Transverse colon (tissue), 4 donors: ENCODE measurements at regions of chr14 and their contacts with region 1.

Region 1: DNA sequence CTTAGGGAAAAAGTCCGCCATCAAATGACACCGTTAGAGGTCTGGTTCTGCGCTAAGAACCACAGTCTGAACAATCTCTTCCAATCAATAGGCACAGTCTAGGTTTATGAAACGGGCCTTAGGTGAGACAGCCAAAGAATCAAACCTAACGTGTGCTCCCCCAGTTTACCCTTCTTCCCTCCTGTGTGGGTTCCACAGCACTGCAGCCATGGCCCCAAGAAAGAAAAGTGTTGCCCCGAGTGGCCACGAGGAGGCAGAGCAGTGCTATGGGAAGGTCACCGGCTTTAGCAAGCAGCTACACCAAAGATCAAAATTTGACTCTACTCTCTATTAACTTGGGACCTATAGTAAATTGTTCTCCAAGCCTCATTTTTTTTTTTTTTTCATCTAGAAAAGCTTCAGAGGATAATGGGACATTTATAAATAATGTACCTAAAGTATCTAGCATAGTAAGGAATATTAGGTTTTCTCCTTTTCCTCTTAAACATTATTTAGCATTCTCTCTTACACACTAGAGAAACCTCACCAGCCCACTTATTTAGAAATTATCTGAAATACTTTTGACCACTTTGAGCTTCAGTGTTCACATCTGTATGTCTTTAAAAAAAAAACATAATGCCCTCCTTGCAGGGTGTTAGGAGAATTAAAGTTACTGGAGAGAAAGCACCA is 70.2 kb upstream of the GPHB5 start:
- DNase-seq: peak; percentile 71
- H3K4me3 ChIP-seq: no peak overlapping the region
- H3K27ac ChIP-seq: no peak overlapping the region
- H3K4me1 ChIP-seq: peaks cover 0 to 12% (median 5%) of the 10 kb centered on the region in 4 donors
- H3K27me3 ChIP-seq: no peaks in the 10 kb centered on the region
- CTCF ChIP-seq: peak; percentile 79 to 89 (median 85)
- EP300 ChIP-seq: no peak
- POLR2A ChIP-seq: no peak

Region 2: GRCh38 chr14:63543000-63543825 is 154.3 kb after region 1 on chr14 and contains the start of gene PPP2R5E:
- in situ Hi-C with region 1: loop called in 3 of 4 experiments (anchors 10 kb)
- intact Hi-C with region 1: loop called (anchors 5 kb)
- DNase-seq: peak; percentile 99
- H3K4me3 ChIP-seq: peak within 1 kb of the TSS; percentile 69 to 100 (median 86)
- H3K27ac ChIP-seq: peak within 1 kb of the TSS; percentile 91 to 98 (median 95)
- H3K4me1 ChIP-seq: peaks cover 5 to 27% (median 17%) of the 10 kb centered on the region in 4 donors
- H3K27me3 ChIP-seq: no peaks in the 10 kb centered on the region
- CTCF ChIP-seq: peak in 1 of 5 experiments; percentile 24
- EP300 ChIP-seq: no peak
- POLR2A ChIP-seq: peak; percentile 90
- total RNA-seq, gene PPP2R5E: 10.5 to 45.2 (median 27.8) TPM

Region 3: DNA sequence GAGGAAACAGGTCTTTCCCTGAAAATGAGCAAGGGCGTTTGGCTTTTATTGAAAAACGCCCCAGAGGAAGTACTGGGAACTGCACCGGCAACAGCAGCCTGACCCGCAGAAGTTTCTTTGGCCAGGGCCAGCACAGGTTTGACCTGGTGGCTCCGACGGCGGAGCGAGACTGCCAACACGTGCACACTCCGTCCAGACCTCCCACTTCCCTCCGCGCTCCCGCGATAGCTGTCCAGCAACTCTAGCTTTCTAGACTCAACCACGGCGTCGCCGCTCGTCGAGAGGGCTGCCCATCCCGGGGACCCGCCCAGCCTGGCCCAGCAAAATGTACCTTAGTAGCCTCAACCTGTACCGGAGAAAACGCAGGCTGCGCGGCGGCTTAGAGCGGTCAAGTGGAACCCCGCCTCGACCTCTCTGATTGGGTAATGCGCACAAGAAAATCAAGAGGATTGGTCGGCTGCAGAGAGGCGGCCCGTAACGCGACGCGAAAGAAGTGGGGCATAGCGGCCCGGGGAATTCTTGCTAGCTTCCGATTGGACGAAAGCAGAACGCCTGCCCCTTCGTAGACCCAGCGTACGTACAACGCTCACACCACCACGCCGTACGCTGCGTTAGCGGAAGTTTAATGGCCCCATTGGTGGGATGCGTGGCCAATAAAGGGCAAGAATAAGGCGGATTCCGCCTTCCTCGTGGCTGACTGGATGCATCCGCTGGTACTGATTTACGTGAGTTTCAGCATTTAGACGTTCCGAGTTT is 252.8 kb after region 1 on chr14 and contains the start of gene WDR89:
- in situ Hi-C with region 1: no loop called
- intact Hi-C with region 1: loop called (anchors 5 kb)
- DNase-seq: peak; percentile 98
- H3K4me3 ChIP-seq: peak within 1 kb of the TSS; percentile 43 to 69 (median 48)
- H3K27ac ChIP-seq: peak within 1 kb of the TSS; percentile 94 to 97 (median 94)
- H3K4me1 ChIP-seq: peaks cover 0 to 22% (median 11%) of the 10 kb centered on the region in 4 donors
- H3K27me3 ChIP-seq: no peaks in the 10 kb centered on the region
- CTCF ChIP-seq: peak; percentile 83 to 97 (median 88)
- EP300 ChIP-seq: no peak
- POLR2A ChIP-seq: peak; percentile 73
- total RNA-seq, gene WDR89: 3.8 to 17.2 (median 7.2) TPM

Region 4: GRCh38 chr14:63760014-63760413 is 371.1 kb after region 1 on chr14:
- in situ Hi-C with region 1: loop called in 2 of 4 experiments (anchors 10 to 25 kb)
- intact Hi-C with region 1: no loop called
- DNase-seq: no peak
- H3K4me3 ChIP-seq: no peak overlapping the region
- H3K27ac ChIP-seq: peak overlapping the region in 3 of 4 donors; percentile 17 to 57 (median 27)
- H3K4me1 ChIP-seq: peaks cover 0 to 5% (median 0%) of the 10 kb centered on the region in 4 donors
- H3K27me3 ChIP-seq: no peaks in the 10 kb centered on the region
- CTCF ChIP-seq: no peak
- EP300 ChIP-seq: no peak
- POLR2A ChIP-seq: no peak

Region 5: GRCh38 chr14:63770187-63770807 is 381.4 kb after region 1 on chr14:
- in situ Hi-C with region 1: loop called (anchors 10 to 25 kb)
- intact Hi-C with region 1: no loop called
- DNase-seq: peak; percentile 53
- H3K4me3 ChIP-seq: no peak overlapping the region
- H3K27ac ChIP-seq: no peak overlapping the region
- H3K4me1 ChIP-seq: no peaks in the 10 kb centered on the region
- H3K27me3 ChIP-seq: no peaks in the 10 kb centered on the region
- CTCF ChIP-seq: peak; percentile 41 to 65 (median 59)
- EP300 ChIP-seq: no peak
- POLR2A ChIP-seq: no peak

Region 6: DNA sequence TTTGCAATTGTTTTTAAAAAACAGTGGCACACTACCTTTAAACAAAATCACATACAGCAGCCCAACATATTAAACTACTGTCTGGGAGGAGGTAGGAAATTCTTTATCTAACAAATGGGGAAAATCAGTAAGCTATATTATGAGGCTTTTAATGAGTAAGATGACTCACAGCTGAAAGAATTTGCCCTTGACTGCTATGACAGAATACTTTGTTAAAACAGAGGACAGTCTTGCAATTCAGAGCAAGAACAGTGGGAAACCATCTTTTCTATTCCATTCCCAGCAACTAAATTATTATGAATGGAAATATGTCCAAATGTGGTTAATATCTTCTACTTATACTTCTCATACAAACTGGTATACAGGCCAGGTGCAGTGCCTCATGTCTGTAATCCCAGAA is 388.1 kb after region 1 on chr14:
- in situ Hi-C with region 1: loop called in 3 of 4 experiments (anchors 25 kb)
- intact Hi-C with region 1: no loop called
- DNase-seq: no peak
- H3K4me3 ChIP-seq: no peak overlapping the region
- H3K27ac ChIP-seq: no peak overlapping the region
- H3K4me1 ChIP-seq: no peaks in the 10 kb centered on the region
- H3K27me3 ChIP-seq: no peaks in the 10 kb centered on the region
- CTCF ChIP-seq: no peak
- EP300 ChIP-seq: no peak
- POLR2A ChIP-seq: no peak